Activated naive CD4-positive, alpha-beta T cell treated with anti-CD3 and anti-CD28 coated beads for 36 hours (primary cell): ENCODE measurements at regions of chr17 and their contacts with region 1.

Region 1: GRCh38 chr17:76397687-76398487 is 13.5 kb downstream of the SPHK1 start:
- DNase-seq: peak; percentile 93
- H3K4me3 Mint-ChIP-seq: no peak overlapping the region
- H3K27ac Mint-ChIP-seq: no peak overlapping the region
- H3K4me1 Mint-ChIP-seq: no peaks in the 10 kb centered on the region
- H3K27me3 Mint-ChIP-seq: no peaks in the 10 kb centered on the region

Region 2: GRCh38 chr17:76182016-76182764 is 215.7 kb before region 1 on chr17:
- CTCF ChIA-PET with region 1: no interaction called
- intact Hi-C with region 1: no loop called
- DNase-seq: peak; percentile 99
- H3K4me3 Mint-ChIP-seq: peak overlapping the region; percentile 63
- H3K27ac Mint-ChIP-seq: peak overlapping the region; percentile 94
- H3K4me1 Mint-ChIP-seq: peaks cover 74% of the 10 kb centered on the region
- H3K27me3 Mint-ChIP-seq: no peaks in the 10 kb centered on the region

Region 3: DNA sequence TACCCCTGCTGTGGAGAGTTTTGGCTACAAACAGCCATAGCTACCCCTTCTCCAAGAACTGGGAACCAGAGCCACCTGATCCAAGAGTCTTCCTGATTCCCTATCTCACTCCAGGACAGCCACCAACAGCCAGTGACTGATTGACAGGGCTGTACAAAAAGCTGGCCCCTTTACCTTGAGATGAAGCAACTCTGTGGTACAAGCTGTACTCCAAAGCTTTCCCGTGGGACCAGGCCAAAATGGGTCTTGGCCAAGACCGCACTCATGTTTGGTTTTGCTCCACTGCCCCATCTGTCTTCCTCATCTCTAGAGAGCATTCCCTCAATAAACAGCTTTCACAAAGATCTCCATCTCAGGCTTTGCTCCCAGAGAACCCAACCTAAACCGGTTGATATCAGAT is 201.2 kb before region 1 on chr17:
- CTCF ChIA-PET with region 1: no interaction called
- intact Hi-C with region 1: no loop called
- DNase-seq: no peak
- H3K4me3 Mint-ChIP-seq: no peak overlapping the region
- H3K27ac Mint-ChIP-seq: peak overlapping the region; percentile 14
- H3K4me1 Mint-ChIP-seq: peaks cover 87% of the 10 kb centered on the region
- H3K27me3 Mint-ChIP-seq: no peaks in the 10 kb centered on the region

Region 4: GRCh38 chr17:76307299-76307965 is 90.5 kb before region 1 on chr17:
- CTCF ChIA-PET with region 1: interaction called, 113 read pairs
- intact Hi-C with region 1: loop called (anchors 1 kb)
- DNase-seq: no peak
- H3K4me3 Mint-ChIP-seq: no peak overlapping the region
- H3K27ac Mint-ChIP-seq: no peak overlapping the region
- H3K4me1 Mint-ChIP-seq: no peaks in the 10 kb centered on the region
- H3K27me3 Mint-ChIP-seq: no peaks in the 10 kb centered on the region

Region 5: GRCh38 chr17:76363107-76363842 is 34.6 kb before region 1 on chr17:
- CTCF ChIA-PET with region 1: interaction called, 10 read pairs
- intact Hi-C with region 1: no loop called
- DNase-seq: no peak
- H3K4me3 Mint-ChIP-seq: no peak overlapping the region
- H3K27ac Mint-ChIP-seq: no peak overlapping the region
- H3K4me1 Mint-ChIP-seq: peaks cover 3% of the 10 kb centered on the region
- H3K27me3 Mint-ChIP-seq: no peaks in the 10 kb centered on the region

Region 6: GRCh38 chr17:76384222-76384986 is 13.5 kb before region 1 on chr17 and contains the start of gene SPHK1:
- CTCF ChIA-PET with region 1: interaction called, 51 read pairs
- intact Hi-C with region 1: no loop called
- DNase-seq: peak; percentile 68
- H3K4me3 Mint-ChIP-seq: peak within 1 kb of the TSS; percentile 83
- H3K27ac Mint-ChIP-seq: peak within 1 kb of the TSS; percentile 79
- H3K4me1 Mint-ChIP-seq: peaks cover 6% of the 10 kb centered on the region
- H3K27me3 Mint-ChIP-seq: no peaks in the 10 kb centered on the region
- total RNA-seq, gene SPHK1: 9.0 to 9.2 TPM

Region 7: GRCh38 chr17:76414334-76415295 is 16.7 kb after region 1 on chr17:
- CTCF ChIA-PET with region 1: interaction called, 13 read pairs
- intact Hi-C with region 1: no loop called
- DNase-seq: no peak
- H3K4me3 Mint-ChIP-seq: no peak overlapping the region
- H3K27ac Mint-ChIP-seq: no peak overlapping the region
- H3K4me1 Mint-ChIP-seq: peaks cover 5% of the 10 kb centered on the region
- H3K27me3 Mint-ChIP-seq: no peaks in the 10 kb centered on the region